ENCODE measurements at regions of chr6 and their contacts with region 1.

Region 1: GRCh38 chr6:166989427-166990032 is 9.7 kb upstream of the CEP43 start:
- DNase-seq: peak; percentile 47
- ATAC-seq: peak; percentile 71
- H3K4me3 ChIP-seq: no peak overlapping the region
- H3K27ac ChIP-seq: no peak overlapping the region
- H3K4me1 ChIP-seq: peaks cover 32% of the 10 kb centered on the region
- H3K27me3 ChIP-seq: no peaks in the 10 kb centered on the region
- CTCF ChIP-seq: peak; percentile 62
- EP300 ChIP-seq: no peak
- POLR2A ChIP-seq: no peak
- RAD21 ChIP-seq: peak; percentile 49

Region 2: DNA sequence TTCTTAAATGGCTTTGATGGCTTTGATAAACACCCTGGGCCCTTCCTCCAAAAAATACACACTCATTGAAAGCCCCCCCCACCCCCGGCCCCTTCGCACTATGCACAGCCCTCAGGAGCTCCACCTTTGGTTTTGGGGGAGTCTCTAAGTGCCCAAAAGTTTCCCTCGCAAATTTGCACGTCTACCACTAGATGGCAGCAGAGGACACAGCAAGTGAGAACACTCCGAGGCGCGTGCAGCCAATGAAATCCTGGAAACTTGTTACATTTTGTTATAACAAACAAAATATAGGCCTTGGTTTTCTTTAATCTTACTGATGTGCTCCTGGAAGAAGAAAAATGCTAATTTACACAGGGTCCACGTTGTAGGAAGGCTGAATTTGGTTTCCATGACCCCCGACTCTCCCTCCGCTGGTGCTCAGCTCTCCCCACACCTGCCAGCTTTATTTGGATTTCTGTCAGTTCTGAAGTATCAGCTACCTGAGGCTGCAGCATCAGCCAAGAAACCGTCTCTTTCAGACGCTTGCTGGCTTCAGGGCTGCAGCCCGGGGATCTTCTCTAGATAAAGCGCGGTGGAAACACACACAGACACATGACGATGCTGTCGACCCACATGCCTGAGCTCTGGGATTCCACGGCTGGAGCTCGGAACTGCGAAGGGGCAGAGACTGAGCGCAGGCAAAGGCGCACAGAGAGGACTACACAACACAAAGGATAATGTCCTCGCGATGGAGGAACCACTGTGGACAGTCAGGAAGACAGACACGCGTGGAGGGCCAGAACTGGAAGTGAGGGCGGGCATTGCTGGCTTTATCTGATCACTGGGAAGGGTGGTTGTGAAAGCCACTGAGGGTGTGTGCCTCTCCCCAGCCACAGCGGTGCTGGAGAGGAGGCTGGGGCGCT is 214.1 kb before region 1 on chr6:
- CTCF ChIA-PET with region 1: interaction called, 7 read pairs
- POLR2A ChIA-PET with region 1: no interaction called
- in situ Hi-C with region 1: loop called (anchors 5 kb)
- intact Hi-C with region 1: loop called (anchors 1 kb)
- DNase-seq: peak; percentile 75
- ATAC-seq: peak; percentile 83
- H3K4me3 ChIP-seq: peak overlapping the region in 2 of 3 experiments; percentile 11 to 49; a peak in 2 of 6 replicates
- H3K27ac ChIP-seq: no peak overlapping the region
- H3K4me1 ChIP-seq: peaks cover 5% of the 10 kb centered on the region
- H3K27me3 ChIP-seq: peaks cover 0 to 78% of the 10 kb centered on the region in 2 experiments; a peak in 4 of 5 replicates
- CTCF ChIP-seq: peak; percentile 84
- EP300 ChIP-seq: no peak
- POLR2A ChIP-seq: no peak
- RAD21 ChIP-seq: peak; percentile 70

Region 3: DNA sequence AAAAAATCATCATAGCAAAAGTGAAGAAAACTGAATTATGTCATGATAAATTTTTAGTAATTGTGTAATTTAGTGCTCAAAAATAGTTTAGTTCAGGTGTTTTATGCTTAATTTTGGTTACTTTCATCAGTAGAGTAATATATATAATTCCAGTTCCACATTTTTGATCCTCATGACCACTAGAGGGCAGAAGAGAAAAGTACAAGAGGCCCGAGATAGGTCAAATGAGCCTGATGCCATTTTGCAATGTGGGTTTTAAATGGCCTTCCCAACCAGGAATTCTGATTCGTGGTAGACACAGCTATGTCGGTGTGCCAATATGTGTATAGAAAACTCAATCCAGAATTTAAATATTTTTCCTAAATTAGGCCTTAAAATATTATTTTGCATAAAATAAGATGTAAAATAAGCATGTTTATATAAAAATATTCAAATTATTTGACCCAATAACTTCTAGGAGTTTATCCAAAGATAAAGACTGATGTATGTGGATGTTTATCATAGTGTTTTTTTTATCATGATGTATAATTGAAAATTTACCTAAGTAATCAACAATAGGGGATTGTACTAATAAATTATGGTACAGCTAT is 202.7 kb before region 1 on chr6:
- CTCF ChIA-PET with region 1: interaction called, 33 read pairs
- POLR2A ChIA-PET with region 1: no interaction called
- in situ Hi-C with region 1: no loop called
- intact Hi-C with region 1: loop called (anchors 1 kb)
- DNase-seq: peak; percentile 81
- ATAC-seq: peak; percentile 74
- H3K4me3 ChIP-seq: no peak overlapping the region
- H3K27ac ChIP-seq: no peak overlapping the region
- H3K4me1 ChIP-seq: no peaks in the 10 kb centered on the region
- H3K27me3 ChIP-seq: no peaks in the 10 kb centered on the region
- CTCF ChIP-seq: peak; percentile 74
- EP300 ChIP-seq: no peak
- POLR2A ChIP-seq: no peak
- RAD21 ChIP-seq: peak; percentile 52; the same call in 1 of the 2 replicates

Region 4: GRCh38 chr6:166849749-166850183 is 139.8 kb before region 1 on chr6:
- CTCF ChIA-PET with region 1: no interaction called
- POLR2A ChIA-PET with region 1: no interaction called
- in situ Hi-C with region 1: no loop called
- intact Hi-C with region 1: no loop called
- DNase-seq: no peak
- ATAC-seq: no peak
- H3K4me3 ChIP-seq: no peak overlapping the region
- H3K27ac ChIP-seq: no peak overlapping the region
- H3K4me1 ChIP-seq: no peaks in the 10 kb centered on the region
- H3K27me3 ChIP-seq: no peaks in the 10 kb centered on the region
- CTCF ChIP-seq: no peak
- EP300 ChIP-seq: no peak
- POLR2A ChIP-seq: no peak
- RAD21 ChIP-seq: no peak

Region 5: DNA sequence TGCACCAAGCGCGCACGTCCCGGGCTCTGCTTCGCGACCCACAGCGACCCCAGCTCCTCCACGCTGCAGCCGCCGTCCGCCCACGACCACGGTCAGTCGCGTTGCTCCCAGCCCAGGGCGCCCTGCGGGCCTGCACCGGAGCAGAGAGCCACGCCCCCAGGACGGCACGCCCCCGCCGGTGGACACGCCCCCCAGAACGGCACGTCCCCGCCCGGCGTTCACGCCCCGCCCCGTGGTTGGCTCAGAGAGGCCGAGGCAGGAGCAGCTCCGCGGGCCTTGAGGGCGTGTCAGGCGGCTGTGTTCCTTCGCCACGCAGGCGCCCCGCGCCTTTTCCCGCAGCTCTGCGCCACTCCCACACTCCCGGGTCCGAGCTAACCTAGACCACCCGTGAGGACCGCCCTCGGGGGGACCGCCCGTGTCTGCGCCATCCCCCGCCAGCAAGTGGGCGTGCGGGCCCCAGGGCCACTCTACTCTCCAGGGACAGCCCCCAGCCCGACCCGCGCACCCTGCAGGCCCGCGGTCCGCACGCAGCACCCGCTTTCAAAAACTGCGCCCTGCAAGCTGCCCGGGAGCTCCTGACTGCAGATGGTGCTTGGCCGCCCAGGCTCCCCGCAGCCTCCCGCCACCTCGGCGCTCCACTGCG is 33.0 kb before region 1 on chr6 and contains the start of gene RNASET2:
- CTCF ChIA-PET with region 1: no interaction called
- POLR2A ChIA-PET with region 1: interaction called, 6 read pairs
- in situ Hi-C with region 1: no loop called
- intact Hi-C with region 1: loop called (anchors 2 kb)
- DNase-seq: peak; percentile 88
- ATAC-seq: peak; percentile 85
- H3K4me3 ChIP-seq: peak within 1 kb of the TSS; percentile 90 to 99 (median 97)
- H3K27ac ChIP-seq: peak within 1 kb of the TSS; percentile 89
- H3K4me1 ChIP-seq: peaks cover 80% of the 10 kb centered on the region
- H3K27me3 ChIP-seq: no peaks in the 10 kb centered on the region; a peak in 1 of 5 replicates
- CTCF ChIP-seq: peak; percentile 10
- EP300 ChIP-seq: peak in 1 of 2 experiments; percentile 1; a peak in 1 of 4 replicates
- POLR2A ChIP-seq: peak in 1 of 2 experiments; percentile 68; a peak in 2 of 4 replicates
- RAD21 ChIP-seq: peak; percentile 14; the same call in 1 of the 2 replicates
- total RNA-seq, gene RNASET2: 22.4 and 44.6 TPM in 2 replicates